Vagina (tissue), 2 donors: ENCODE measurements at regions of chr13 and their contacts with region 1.

Region 1: DNA sequence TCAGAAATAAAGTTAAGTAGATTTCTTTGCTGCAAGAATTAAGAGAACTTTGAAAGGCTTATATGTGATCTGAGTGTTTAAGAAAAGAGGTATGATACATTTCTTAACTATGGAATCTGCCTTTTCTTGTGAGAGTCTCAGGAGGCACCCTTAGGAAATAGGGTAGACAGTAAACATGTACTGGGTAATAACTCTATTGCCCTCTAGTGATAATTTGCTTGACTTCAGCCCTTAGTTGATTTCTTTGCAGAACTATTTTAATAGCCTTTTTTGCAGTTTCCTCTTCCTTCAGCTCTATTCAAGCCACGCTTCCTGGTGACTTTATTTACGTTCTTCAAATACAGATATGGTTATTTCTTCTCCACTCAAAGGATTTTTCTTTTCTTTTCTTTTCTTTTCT is 37.0 kb upstream of the CCNA1 start:
- DNase-seq: no peak
- H3K4me3 ChIP-seq: no peak overlapping the region
- H3K27ac ChIP-seq: no peak overlapping the region
- H3K4me1 ChIP-seq: no peaks in the 10 kb centered on the region
- H3K27me3 ChIP-seq: no peaks in the 10 kb centered on the region
- CTCF ChIP-seq: peak in 1 of 3 experiments; percentile 53
- POLR2A ChIP-seq: no peak

Region 2: GRCh38 chr13:36282818-36283445 is 112.3 kb before region 1 on chr13:
- intact Hi-C with region 1: loop called (anchors 10 kb)
- DNase-seq: no peak
- H3K4me3 ChIP-seq: no peak overlapping the region
- H3K27ac ChIP-seq: no peak overlapping the region
- H3K4me1 ChIP-seq: no peaks in the 10 kb centered on the region
- H3K27me3 ChIP-seq: no peaks in the 10 kb centered on the region
- CTCF ChIP-seq: peak; percentile 56 to 75 (median 66)
- POLR2A ChIP-seq: no peak

Region 3: DNA sequence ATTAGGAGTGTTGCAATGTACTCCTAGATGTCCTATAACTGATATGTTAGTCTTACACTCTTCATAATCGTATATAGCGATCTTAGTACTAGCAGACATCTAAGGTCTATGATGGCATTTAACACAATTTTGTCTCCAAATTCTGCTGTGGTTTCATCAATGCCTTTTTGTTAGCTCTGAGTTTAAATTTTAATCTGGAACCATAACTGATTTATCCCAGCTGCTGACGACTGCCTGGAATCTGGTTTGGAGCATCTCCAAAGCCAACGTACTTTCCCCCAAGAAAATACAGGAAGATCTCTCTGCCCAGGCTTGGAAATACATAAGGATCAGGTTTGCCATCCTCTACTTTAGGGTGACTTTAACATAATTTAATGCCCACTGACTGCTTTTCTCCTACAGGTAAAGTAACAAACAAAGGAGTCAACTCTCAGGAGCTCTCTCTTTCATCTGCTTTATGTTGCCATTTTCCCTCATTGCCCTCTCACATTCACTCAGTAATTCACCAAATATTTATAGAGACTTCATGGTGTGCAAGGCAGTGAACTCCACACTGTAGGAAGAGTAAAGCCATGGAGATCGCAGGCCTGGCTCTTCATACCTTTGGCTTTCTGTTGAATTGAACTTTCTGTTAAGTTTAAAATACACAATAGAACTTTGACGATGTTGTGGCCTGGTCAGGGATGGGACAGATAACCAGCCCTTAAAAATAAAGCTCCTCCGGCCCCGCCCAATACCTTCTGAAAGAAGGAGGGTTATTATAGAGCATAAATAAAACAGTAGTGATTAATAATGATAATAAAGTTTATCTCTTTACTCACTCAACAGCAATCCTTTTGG is 25.8 kb before region 1 on chr13:
- intact Hi-C with region 1: no loop called
- DNase-seq: no peak
- H3K4me3 ChIP-seq: no peak overlapping the region
- H3K27ac ChIP-seq: no peak overlapping the region
- H3K4me1 ChIP-seq: peaks cover 6% of the 10 kb centered on the region
- H3K27me3 ChIP-seq: no peaks in the 10 kb centered on the region
- CTCF ChIP-seq: no peak
- POLR2A ChIP-seq: no peak